ENCODE measurements at regions of chr1 and their contacts with region 1.

Region 1: GRCh38 chr1:147640553-147641165 is 29.7 kb downstream of the ACP6 start:
- DNase-seq: peak in 6 of 10 donors; percentile 47 to 92 (median 54)

Region 2: GRCh38 chr1:147892731-147893214 is 252.1 kb after region 1 on chr1:
- intact Hi-C with region 1: loop called (anchors 1 kb)
- DNase-seq: peak in 3 of 10 donors; percentile 35 to 91 (median 38)

Region 3: DNA sequence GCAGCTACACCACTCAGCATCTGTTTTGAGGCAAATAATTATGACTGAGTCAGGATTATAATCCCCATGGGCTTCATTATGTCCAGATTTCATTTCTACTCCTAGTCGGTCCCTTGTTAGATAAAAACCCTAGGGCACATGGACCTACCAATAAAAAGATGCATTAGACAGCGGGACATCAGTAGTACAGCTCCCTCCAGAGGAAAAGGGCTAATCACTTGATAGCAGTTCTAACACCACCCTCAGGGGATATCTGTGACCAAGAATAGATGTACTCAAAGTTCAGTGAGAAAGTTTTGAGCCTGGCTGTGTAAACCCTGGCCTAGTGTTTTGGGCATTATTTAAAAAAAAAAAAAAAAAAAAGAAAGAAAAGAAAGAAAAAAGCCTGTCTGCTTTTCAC is 271.9 kb after region 1 on chr1:
- intact Hi-C with region 1: no loop called
- DNase-seq: no peak

Measured in posterior cingulate gyrus (tissue), 11 donors.